ENCODE measurements at regions of chr10 and their contacts with region 1.

Region 1: GRCh38 chr10:108249940-108250339 is 1085.4 kb upstream of the SORCS1 start:
- DNase-seq: no peak
- ATAC-seq: no peak
- H3K4me3 ChIP-seq: no peak overlapping the region
- H3K27ac ChIP-seq: no peak overlapping the region
- H3K4me1 ChIP-seq: no peaks in the 10 kb centered on the region
- H3K27me3 ChIP-seq: no peaks in the 10 kb centered on the region
- CTCF ChIP-seq: peak; percentile 16 to 35 (median 27); a peak in 3 of 6 replicates
- EP300 ChIP-seq: no peak
- POLR2A ChIP-seq: no peak
- RAD21 ChIP-seq: peak; percentile 40; the same call in 1 of the 2 replicates

Region 2: GRCh38 chr10:108230478-108231170 is 19.3 kb before region 1 on chr10:
- CTCF ChIA-PET with region 1: interaction called, 10 read pairs
- POLR2A ChIA-PET with region 1: no interaction called
- RAD21 ChIA-PET with region 1: no interaction called
- SMC1A ChIA-PET with region 1: interaction called, 4 read pairs
- in situ Hi-C with region 1: no loop called
- intact Hi-C with region 1: no loop called
- DNase-seq: no peak
- ATAC-seq: no peak
- H3K4me3 ChIP-seq: no peak overlapping the region
- H3K27ac ChIP-seq: no peak overlapping the region
- H3K4me1 ChIP-seq: no peaks in the 10 kb centered on the region
- H3K27me3 ChIP-seq: no peaks in the 10 kb centered on the region
- CTCF ChIP-seq: no peak
- EP300 ChIP-seq: no peak
- POLR2A ChIP-seq: no peak
- RAD21 ChIP-seq: no peak